CD8-positive, alpha-beta T cell (primary cell): ENCODE measurements at regions of chr19 and their contacts with region 1.

Region 1: GRCh38 chr19:12551060-12551832 is at the start of gene ZNF564:
- DNase-seq: peak; percentile 85 to 98 (median 92)
- ATAC-seq: peak; percentile 98
- H3K4me3 ChIP-seq: peak within 1 kb of the TSS; percentile 59 to 94
- H3K4me3 Mint-ChIP-seq: peak within 1 kb of the TSS; percentile 98
- H3K27ac ChIP-seq: peak within 1 kb of the TSS; percentile 88 to 91
- H3K27ac Mint-ChIP-seq: peak within 1 kb of the TSS; percentile 97
- H3K4me1 ChIP-seq: peaks cover 25% of the 10 kb centered on the region
- H3K4me1 Mint-ChIP-seq: peaks cover 51% of the 10 kb centered on the region
- H3K27me3 ChIP-seq: no peaks in the 10 kb centered on the region
- H3K27me3 Mint-ChIP-seq: no peaks in the 10 kb centered on the region
- CTCF ChIP-seq: no peak
- total RNA-seq, gene ZNF564: 17.8 to 18.2 TPM

Region 2: DNA sequence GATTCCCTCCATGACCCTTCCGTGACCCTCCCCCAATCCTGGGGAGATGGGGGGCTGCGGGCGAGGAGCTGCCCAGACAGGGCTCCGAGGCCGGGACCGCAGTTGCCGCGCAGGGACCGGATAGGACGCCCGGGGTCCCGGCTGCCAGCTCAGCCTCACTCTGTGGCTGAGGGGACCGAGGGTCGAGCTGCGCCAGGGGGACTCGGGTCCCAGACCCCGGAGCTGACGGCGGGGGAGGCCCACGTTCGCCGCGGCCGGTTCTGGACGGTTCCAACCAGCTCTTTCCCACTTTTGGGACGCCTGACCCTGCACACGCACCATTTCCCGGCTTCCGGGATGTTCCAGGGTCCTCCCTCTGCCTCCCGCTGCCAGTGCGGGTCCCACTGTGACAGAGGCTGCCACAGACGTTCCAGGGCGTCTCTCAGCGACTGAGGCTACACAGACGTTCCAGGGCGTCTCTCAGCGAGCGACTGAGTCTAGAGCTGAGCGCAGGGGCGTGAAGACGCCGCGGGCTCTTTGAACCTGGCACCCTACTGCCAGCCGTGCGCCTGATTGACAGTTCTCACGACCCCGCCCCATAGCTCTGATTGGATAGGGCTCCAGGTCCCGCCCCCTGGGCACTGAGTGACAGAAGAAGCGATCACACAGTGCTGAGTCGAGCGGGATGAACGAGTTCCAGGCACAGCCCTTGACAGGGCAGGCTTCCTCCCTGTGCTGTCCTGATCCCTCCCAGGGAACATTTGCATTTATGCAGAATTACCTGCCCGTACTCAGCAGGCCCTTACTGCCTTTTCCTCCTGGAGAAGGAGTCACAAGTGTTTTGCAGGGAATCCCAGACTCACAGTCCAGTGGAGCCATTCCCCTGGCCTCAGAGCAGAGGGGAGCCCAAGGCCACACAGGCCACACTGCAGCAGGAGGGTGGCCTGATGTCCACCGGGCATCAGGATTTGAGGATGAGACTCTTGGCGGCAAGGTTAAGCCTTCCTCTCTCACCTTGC is 217.8 kb before region 1 on chr19 and contains the start of gene ZNF563:
- CTCF ChIA-PET with region 1: no interaction called
- POLR2A ChIA-PET with region 1: interaction called, 5 read pairs
- intact Hi-C with region 1: loop called in 1 of 2 experiments (anchors 1 kb)
- DNase-seq: peak; percentile 94 to 98 (median 97)
- ATAC-seq: peak; percentile 94
- H3K4me3 ChIP-seq: peak within 1 kb of the TSS; percentile 81 to 86
- H3K4me3 Mint-ChIP-seq: peak within 1 kb of the TSS; percentile 96
- H3K27ac ChIP-seq: peak within 1 kb of the TSS; percentile 81 to 83
- H3K27ac Mint-ChIP-seq: peak within 1 kb of the TSS; percentile 99
- H3K4me1 ChIP-seq: peaks cover 35% of the 10 kb centered on the region
- H3K4me1 Mint-ChIP-seq: peaks cover 41% of the 10 kb centered on the region
- H3K27me3 ChIP-seq: no peaks in the 10 kb centered on the region
- H3K27me3 Mint-ChIP-seq: no peaks in the 10 kb centered on the region
- CTCF ChIP-seq: no peak
- total RNA-seq, gene ZNF563: 2.2 to 2.5 TPM

Region 3: GRCh38 chr19:12440541-12441316 is 110.5 kb before region 1 on chr19 and contains the start of gene ZNF443:
- CTCF ChIA-PET with region 1: no interaction called
- POLR2A ChIA-PET with region 1: no interaction called
- intact Hi-C with region 1: loop called (anchors 1 to 2 kb)
- DNase-seq: peak; percentile 97 to 99 (median 98)
- ATAC-seq: peak; percentile 97
- H3K4me3 ChIP-seq: peak within 1 kb of the TSS; percentile 55 to 87
- H3K4me3 Mint-ChIP-seq: peak within 1 kb of the TSS; percentile 100
- H3K27ac ChIP-seq: peak within 1 kb of the TSS; percentile 26 to 46
- H3K27ac Mint-ChIP-seq: peak within 1 kb of the TSS; percentile 92
- H3K4me1 ChIP-seq: no peaks in the 10 kb centered on the region
- H3K4me1 Mint-ChIP-seq: peaks cover 19% of the 10 kb centered on the region
- H3K27me3 ChIP-seq: no peaks in the 10 kb centered on the region
- H3K27me3 Mint-ChIP-seq: no peaks in the 10 kb centered on the region
- CTCF ChIP-seq: no peak
- total RNA-seq, gene ZNF443: 2.1 to 2.6 TPM

Region 4: DNA sequence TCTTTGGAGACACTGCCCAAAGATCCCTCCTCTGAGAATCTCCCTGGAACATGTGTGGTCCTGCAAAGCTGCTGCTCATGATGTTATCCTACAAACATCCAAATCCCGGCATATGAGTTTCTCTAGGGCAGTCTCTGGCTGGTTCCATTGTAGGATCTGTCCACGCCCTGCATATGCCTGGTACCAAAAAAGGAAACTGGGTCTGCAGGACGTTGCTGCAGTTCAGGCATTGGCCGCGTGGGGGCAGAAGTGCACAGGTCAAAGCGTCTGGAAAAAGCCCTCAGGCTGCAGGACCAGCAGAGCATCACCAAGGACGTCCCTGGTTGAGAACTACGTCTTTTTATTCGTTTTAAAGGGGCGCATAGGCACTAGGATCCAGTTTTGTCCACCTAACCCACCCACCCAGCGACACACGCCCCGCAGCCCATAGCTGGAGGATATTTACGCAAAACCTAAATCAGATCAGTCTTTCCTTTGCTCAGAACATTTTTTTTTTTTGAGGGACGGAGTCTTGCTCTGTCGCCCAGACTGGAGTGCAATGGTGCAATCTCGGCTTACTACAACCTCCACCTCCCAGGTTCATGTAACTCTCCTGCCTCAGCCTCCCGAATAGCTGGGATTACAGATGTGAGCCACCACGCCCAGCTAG is 12.9 kb after region 1 on chr19:
- CTCF ChIA-PET with region 1: interaction called, 25 read pairs
- POLR2A ChIA-PET with region 1: no interaction called
- intact Hi-C with region 1: no loop called
- DNase-seq: peak; percentile 83 to 96 (median 91)
- ATAC-seq: peak; percentile 100
- H3K4me3 ChIP-seq: no peak overlapping the region
- H3K4me3 Mint-ChIP-seq: no peak overlapping the region
- H3K27ac ChIP-seq: no peak overlapping the region
- H3K27ac Mint-ChIP-seq: no peak overlapping the region
- H3K4me1 ChIP-seq: no peaks in the 10 kb centered on the region
- H3K4me1 Mint-ChIP-seq: peaks cover 5% of the 10 kb centered on the region
- H3K27me3 ChIP-seq: no peaks in the 10 kb centered on the region
- H3K27me3 Mint-ChIP-seq: no peaks in the 10 kb centered on the region
- CTCF ChIP-seq: peak; percentile 91

Region 5: DNA sequence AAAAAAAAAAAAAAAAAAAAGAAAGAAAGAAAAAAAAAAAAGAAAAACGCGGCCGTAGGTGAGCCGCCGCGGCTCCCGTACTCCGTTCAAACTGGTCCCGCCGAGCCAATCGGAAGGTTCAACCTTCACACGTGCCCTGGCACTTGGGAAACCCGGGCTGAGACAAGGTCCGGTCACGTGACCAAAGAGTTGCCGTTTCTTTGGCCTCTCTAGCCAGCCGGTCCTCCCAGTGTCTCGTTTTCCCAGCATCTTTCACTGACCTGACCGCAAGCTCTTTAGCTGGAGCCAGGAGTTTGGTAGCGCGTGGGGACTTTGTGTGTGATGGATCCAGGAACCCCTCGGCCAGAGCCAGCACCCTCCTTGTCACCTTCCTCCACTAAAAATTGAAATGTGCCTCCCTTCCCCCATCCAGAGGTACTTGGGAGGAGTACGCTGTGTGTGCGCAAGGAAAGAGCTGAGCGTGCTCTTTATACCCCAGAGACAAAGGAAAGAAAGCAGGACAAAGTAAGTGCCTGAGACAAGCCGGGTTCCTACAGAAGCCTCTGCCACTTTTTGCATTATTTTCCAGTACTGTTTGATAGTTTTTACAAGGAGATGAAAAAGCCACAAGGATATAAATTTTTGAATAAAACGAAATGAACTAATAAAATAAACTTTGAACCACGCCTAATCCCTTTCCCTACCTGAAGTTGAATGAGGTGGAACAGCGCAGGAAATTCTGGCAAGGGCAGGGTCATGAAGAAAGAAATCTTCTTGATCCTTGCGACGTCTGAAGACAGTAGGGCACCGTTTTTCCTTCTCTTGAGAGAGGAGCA is 171.5 kb after region 1 on chr19:
- CTCF ChIA-PET with region 1: no interaction called
- POLR2A ChIA-PET with region 1: no interaction called
- intact Hi-C with region 1: loop called in 1 of 2 experiments (anchors 5 kb)
- DNase-seq: peak; percentile 81 to 99 (median 92)
- ATAC-seq: peak; percentile 88
- H3K4me3 ChIP-seq: peak overlapping the region; percentile 78 to 85
- H3K4me3 Mint-ChIP-seq: peak overlapping the region; percentile 93
- H3K27ac ChIP-seq: peak overlapping the region; percentile 55 to 80
- H3K27ac Mint-ChIP-seq: peak overlapping the region; percentile 89
- H3K4me1 ChIP-seq: peaks cover 28% of the 10 kb centered on the region
- H3K4me1 Mint-ChIP-seq: peaks cover 37% of the 10 kb centered on the region
- H3K27me3 ChIP-seq: no peaks in the 10 kb centered on the region
- H3K27me3 Mint-ChIP-seq: no peaks in the 10 kb centered on the region
- CTCF ChIP-seq: no peak

Region 6: DNA sequence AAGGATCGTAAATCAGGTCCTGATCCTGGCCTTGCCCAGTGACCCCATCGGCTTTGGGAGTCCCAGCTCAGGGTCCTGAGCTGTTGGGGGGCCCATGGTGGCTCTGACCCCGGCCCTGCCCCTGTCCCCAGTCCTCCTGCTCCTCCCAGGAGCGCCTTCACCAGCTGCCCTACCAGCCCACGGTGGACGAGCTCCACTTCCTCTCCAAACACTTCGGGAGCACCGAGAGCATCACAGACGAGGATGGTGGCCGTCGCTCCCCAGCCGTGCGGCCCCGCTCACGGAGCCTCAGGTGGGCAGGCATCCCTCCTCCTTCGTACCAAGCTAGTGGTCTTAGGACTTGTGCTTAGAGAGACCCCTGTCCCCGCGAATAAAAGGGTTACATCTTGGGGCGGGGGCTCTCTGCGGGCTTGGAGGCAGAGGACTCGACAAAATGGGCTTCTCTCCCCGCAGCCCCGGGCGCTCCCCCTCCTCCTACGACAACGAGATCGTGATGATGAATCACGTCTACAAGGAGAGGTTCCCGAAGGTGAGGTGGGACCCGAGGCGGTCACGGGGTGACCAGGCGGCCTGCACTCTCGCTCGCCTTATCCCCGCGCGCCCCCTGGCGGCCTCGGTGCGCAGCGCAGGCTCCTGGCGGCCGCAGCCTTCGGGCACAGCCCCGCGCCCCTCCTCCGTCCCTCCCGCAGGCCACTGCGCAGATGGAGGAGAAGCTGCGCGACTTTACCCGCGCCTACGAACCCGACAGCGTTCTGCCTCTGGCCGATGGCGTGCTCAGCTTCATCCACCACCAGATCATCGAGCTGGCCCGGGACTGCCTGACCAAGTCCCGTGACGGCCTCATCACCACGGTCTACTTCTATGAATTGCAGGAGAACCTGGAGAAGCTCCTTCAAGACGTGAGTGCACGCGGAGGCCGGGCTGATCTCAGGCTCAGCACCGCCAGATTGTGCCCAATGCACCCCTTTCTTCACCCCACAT is 296.2 kb after region 1 on chr19:
- CTCF ChIA-PET with region 1: no interaction called
- POLR2A ChIA-PET with region 1: no interaction called
- intact Hi-C with region 1: no loop called
- DNase-seq: peak; percentile 66 to 90 (median 83)
- ATAC-seq: peak; percentile 96
- H3K4me3 ChIP-seq: peak overlapping the region; percentile 20 to 25
- H3K4me3 Mint-ChIP-seq: peak overlapping the region; percentile 22
- H3K27ac ChIP-seq: no peak overlapping the region
- H3K27ac Mint-ChIP-seq: no peak overlapping the region
- H3K4me1 ChIP-seq: peaks cover 4% of the 10 kb centered on the region
- H3K4me1 Mint-ChIP-seq: peaks cover 3% of the 10 kb centered on the region
- H3K27me3 ChIP-seq: peaks cover 0 to 9% of the 10 kb centered on the region in 2 experiments
- H3K27me3 Mint-ChIP-seq: peaks cover 37% of the 10 kb centered on the region
- CTCF ChIP-seq: peak; percentile 99

Region 7: DNA sequence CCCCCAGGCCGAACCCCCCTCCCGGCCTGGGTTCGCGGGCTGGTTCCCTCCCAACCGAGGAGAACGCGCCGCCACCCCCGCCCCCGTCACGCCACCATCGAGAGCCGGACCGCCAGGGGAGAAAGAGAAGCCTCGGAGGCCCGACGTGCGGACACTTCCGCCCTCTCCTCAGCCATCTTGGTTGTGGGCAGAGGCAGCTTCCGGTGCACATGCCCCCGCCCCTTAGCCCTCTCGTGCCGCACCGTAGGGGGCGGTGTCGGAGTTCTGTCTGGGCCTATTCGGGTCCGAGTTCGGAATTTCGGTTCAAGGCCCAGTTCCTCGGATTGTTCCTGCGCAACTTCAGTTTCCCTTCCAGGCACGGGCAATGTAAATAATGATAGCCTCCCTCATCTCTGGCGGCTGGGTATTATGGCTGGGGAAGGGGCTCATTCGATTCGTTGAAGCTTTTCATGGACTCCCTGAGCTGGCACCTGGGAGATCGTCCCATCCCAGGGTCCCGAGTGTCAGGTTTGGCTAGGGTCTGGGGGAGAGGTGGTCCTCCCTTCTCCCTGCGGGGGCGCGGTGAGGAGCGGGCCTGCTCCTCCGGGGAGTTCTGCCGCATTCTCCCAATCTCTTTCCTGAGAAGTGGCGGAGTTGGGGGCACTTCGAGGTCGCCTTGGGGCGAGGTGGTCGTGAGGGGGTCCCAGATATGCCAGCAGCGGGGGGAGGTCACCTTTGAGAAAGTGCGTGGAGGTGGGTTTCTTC is 599.1 kb after region 1 on chr19 and contains the starts of genes IER2 and STX10:
- CTCF ChIA-PET with region 1: no interaction called
- POLR2A ChIA-PET with region 1: no interaction called
- intact Hi-C with region 1: no loop called
- DNase-seq: peak; percentile 86 to 97 (median 94)
- ATAC-seq: peak; percentile 55
- H3K4me3 ChIP-seq: peak within 1 kb of the TSS; percentile 77 to 94
- H3K4me3 Mint-ChIP-seq: peak within 1 kb of the TSS; percentile 98
- H3K27ac ChIP-seq: peak within 1 kb of the TSS; percentile 96 to 99
- H3K27ac Mint-ChIP-seq: peak within 1 kb of the TSS; percentile 93
- H3K4me1 ChIP-seq: peaks cover 11% of the 10 kb centered on the region
- H3K4me1 Mint-ChIP-seq: peaks cover 26% of the 10 kb centered on the region
- H3K27me3 ChIP-seq: no peaks in the 10 kb centered on the region
- H3K27me3 Mint-ChIP-seq: no peaks in the 10 kb centered on the region
- CTCF ChIP-seq: peak; percentile 51
- total RNA-seq, gene IER2: 223 to 229 TPM
- total RNA-seq, gene STX10: 35.7 to 37.5 TPM